ENCODE measurements at regions of chr7 and their contacts with region 1.

Region 1: GRCh38 chr7:76282344-76283253 is 19.9 kb upstream of the HSPB1 start:
- DNase-seq: no peak
- H3K4me3 ChIP-seq: no peak overlapping the region
- H3K27ac ChIP-seq: no peak overlapping the region
- H3K4me1 ChIP-seq: no peaks in the 10 kb centered on the region
- H3K27me3 ChIP-seq: peaks cover 41% of the 10 kb centered on the region
- CTCF ChIP-seq: no peak

Region 2: DNA sequence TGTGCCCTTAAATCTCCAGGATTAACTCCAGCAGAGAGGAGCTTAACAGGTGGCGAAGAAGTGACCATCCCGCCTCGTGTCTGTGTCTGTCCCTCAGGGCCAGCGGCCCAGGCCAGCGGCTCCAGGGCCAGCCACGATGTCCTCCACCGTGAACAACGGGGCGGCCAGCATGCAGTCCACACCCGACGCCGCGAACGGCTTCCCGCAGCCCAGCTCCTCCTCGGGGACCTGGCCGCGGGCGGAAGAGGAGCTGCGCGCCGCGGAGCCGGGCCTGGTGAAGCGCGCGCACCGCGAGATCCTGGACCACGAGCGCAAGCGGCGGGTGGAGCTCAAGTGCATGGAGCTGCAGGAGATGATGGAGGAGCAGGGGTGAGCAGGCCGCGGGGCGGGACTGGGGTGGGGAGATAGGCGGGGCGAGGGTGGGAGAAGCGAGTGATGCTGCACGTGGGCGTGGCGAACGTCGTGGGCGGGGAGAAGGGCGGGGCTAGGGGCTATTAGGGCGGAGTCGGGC is 47.6 kb before region 1 on chr7:
- CTCF ChIA-PET with region 1: no interaction called
- POLR2A ChIA-PET with region 1: no interaction called
- intact Hi-C with region 1: no loop called
- DNase-seq: peak in 1 of 2 experiments; percentile 82
- H3K4me3 ChIP-seq: no peak overlapping the region
- H3K27ac ChIP-seq: no peak overlapping the region
- H3K4me1 ChIP-seq: no peaks in the 10 kb centered on the region
- H3K27me3 ChIP-seq: peaks cover 31% of the 10 kb centered on the region
- CTCF ChIP-seq: no peak

Region 3: GRCh38 chr7:76327610-76328009 is 45.0 kb after region 1 on chr7:
- CTCF ChIA-PET with region 1: interaction called, 15 read pairs
- POLR2A ChIA-PET with region 1: no interaction called
- intact Hi-C with region 1: no loop called
- DNase-seq: no peak
- H3K4me3 ChIP-seq: no peak overlapping the region
- H3K27ac ChIP-seq: no peak overlapping the region
- H3K4me1 ChIP-seq: no peaks in the 10 kb centered on the region
- H3K27me3 ChIP-seq: no peaks in the 10 kb centered on the region
- CTCF ChIP-seq: no peak

Measured in PC-9 (cell line).